Heart left ventricle (tissue), 16 donors: ENCODE measurements at regions of chr4 and their contacts with region 1.

Region 1: GRCh38 chr4:145216535-145216934 is 36.1 kb upstream of the OTUD4 start:
- DNase-seq: no peak
- ATAC-seq: no peak
- H3K4me3 ChIP-seq: no peak overlapping the region
- H3K27ac ChIP-seq: no peak overlapping the region
- H3K4me1 ChIP-seq: peaks cover 0 to 9% (median 0%) of the 10 kb centered on the region in 12 donors
- H3K27me3 ChIP-seq: no peaks in the 10 kb centered on the region
- CTCF ChIP-seq: peak in 11 of 12 donors; percentile 33 to 66 (median 53)
- POLR2A ChIP-seq: no peak

Region 2: GRCh38 chr4:145602129-145602760 is 385.7 kb after region 1 on chr4:
- intact Hi-C with region 1: loop called in 1 of 10 experiments (anchors 5 kb)
- DNase-seq: no peak
- ATAC-seq: no peak
- H3K4me3 ChIP-seq: no peak overlapping the region
- H3K27ac ChIP-seq: no peak overlapping the region
- H3K4me1 ChIP-seq: no peaks in the 10 kb centered on the region
- H3K27me3 ChIP-seq: no peaks in the 10 kb centered on the region
- CTCF ChIP-seq: no peak
- POLR2A ChIP-seq: no peak